ENCODE measurements at regions of chr13 and their contacts with region 1.

Region 1: DNA sequence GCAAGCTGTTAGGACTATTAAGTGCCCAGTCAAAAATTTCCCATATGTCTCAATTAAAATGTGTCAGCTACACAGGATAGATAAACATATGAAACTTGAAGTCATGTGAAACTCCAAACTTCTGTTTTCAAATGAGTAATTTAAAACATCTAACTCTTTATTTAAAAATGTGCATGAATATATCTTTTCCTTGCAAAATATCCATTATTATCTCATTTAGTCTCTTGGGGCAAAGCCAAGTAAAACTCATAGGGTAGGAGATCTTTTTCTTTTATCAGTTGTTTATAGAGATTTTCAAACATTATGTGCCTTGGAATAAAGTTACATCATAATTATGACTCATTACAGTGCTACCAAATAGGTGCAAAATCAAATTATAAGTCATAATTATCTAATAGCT is 2020.1 kb upstream of the PRR20A start:
- DNase-seq: no peak
- H3K4me3 ChIP-seq: no peak overlapping the region
- H3K27ac ChIP-seq: no peak overlapping the region
- H3K4me1 ChIP-seq: no peaks in the 10 kb centered on the region
- H3K27me3 ChIP-seq: no peaks in the 10 kb centered on the region
- CTCF ChIP-seq: no peak
- EP300 ChIP-seq: no peak
- POLR2A ChIP-seq: no peak

Region 2: GRCh38 chr13:54953786-54954185 is 166.8 kb before region 1 on chr13:
- intact Hi-C with region 1: no loop called
- DNase-seq: no peak
- H3K4me3 ChIP-seq: no peak overlapping the region
- H3K27ac ChIP-seq: no peak overlapping the region
- H3K4me1 ChIP-seq: no peaks in the 10 kb centered on the region
- H3K27me3 ChIP-seq: no peaks in the 10 kb centered on the region
- CTCF ChIP-seq: no peak
- EP300 ChIP-seq: no peak
- POLR2A ChIP-seq: no peak

Region 3: DNA sequence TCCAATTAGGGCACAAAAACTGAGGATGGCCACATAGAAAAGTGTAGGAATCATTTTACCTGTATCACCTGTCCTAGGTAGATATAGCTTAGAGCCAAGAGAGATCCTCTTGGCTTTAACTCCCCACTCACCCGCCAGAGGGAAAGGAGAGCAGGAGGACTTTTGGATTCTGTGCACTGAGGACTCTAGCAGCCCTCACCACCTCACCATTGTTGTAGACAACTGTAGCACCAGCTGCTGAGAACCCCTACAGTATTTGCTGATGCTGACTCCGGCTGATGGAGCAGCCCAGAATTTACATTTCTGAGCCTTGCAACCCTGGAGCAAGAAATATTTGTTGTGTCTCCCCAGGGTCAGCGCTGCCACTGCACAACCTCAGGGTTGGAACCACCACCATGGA is 47.6 kb before region 1 on chr13:
- intact Hi-C with region 1: loop called in 1 of 4 experiments (anchors 1 kb)
- DNase-seq: no peak
- H3K4me3 ChIP-seq: no peak overlapping the region
- H3K27ac ChIP-seq: no peak overlapping the region
- H3K4me1 ChIP-seq: no peaks in the 10 kb centered on the region
- H3K27me3 ChIP-seq: no peaks in the 10 kb centered on the region
- CTCF ChIP-seq: no peak
- EP300 ChIP-seq: no peak
- POLR2A ChIP-seq: no peak

Region 4: DNA sequence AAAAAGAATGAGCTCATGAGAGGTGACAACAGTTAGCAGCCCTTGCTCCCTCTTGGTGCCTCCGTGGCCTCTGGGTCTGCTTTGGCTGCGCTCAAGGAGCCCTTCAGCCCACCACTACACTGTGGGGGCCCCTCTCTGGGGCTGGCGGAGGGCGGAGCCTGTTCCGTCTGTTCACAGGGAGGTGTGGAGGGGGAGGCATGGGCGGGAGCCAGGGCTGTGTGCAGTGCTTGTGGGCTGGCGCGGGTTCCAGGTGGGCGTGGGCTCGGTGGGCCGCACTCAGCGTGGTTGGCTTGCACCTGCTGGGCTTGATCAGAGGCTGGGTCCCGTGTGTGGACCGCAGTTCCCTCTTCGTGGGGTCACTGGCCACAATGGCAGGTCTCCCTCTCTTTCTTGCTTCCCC is 1066.7 kb after region 1 on chr13:
- intact Hi-C with region 1: no loop called
- DNase-seq: peak in 1 of 5 donors; percentile 25
- H3K4me3 ChIP-seq: no peak overlapping the region
- H3K27ac ChIP-seq: no peak overlapping the region
- H3K4me1 ChIP-seq: no peaks in the 10 kb centered on the region
- H3K27me3 ChIP-seq: peaks cover 3% of the 10 kb centered on the region
- CTCF ChIP-seq: no peak
- EP300 ChIP-seq: no peak
- POLR2A ChIP-seq: no peak

Measured in ovary (tissue), 10 donors.